Psoas muscle (tissue), 8 donors: ENCODE measurements at regions of chr5 and their contacts with region 1.

Region 1: GRCh38 chr5:57298295-57298984 is 124.6 kb downstream of the GPBP1 start:
- DNase-seq: peak; percentile 61 to 79
- ATAC-seq: peak; percentile 86 to 97 (median 92)
- H3K4me3 ChIP-seq: no peak overlapping the region
- H3K27ac ChIP-seq: no peak overlapping the region
- H3K4me1 ChIP-seq: no peaks in the 10 kb centered on the region
- H3K27me3 ChIP-seq: no peaks in the 10 kb centered on the region
- CTCF ChIP-seq: peak; percentile 87

Region 2: GRCh38 chr5:57435701-57436134 is 137.3 kb after region 1 on chr5:
- intact Hi-C with region 1: loop called in 1 of 2 experiments (anchors 5 kb)
- DNase-seq: no peak
- ATAC-seq: no peak
- H3K4me3 ChIP-seq: no peak overlapping the region
- H3K27ac ChIP-seq: no peak overlapping the region
- H3K4me1 ChIP-seq: no peaks in the 10 kb centered on the region
- H3K27me3 ChIP-seq: no peaks in the 10 kb centered on the region
- CTCF ChIP-seq: no peak

Region 3: GRCh38 chr5:57488215-57488955 is 189.9 kb after region 1 on chr5:
- intact Hi-C with region 1: loop called in 1 of 2 experiments (anchors 5 kb)
- DNase-seq: no peak
- ATAC-seq: peak in 1 of 4 donors; percentile 54
- H3K4me3 ChIP-seq: no peak overlapping the region
- H3K27ac ChIP-seq: no peak overlapping the region
- H3K4me1 ChIP-seq: no peaks in the 10 kb centered on the region
- H3K27me3 ChIP-seq: no peaks in the 10 kb centered on the region
- CTCF ChIP-seq: no peak

Region 4: DNA sequence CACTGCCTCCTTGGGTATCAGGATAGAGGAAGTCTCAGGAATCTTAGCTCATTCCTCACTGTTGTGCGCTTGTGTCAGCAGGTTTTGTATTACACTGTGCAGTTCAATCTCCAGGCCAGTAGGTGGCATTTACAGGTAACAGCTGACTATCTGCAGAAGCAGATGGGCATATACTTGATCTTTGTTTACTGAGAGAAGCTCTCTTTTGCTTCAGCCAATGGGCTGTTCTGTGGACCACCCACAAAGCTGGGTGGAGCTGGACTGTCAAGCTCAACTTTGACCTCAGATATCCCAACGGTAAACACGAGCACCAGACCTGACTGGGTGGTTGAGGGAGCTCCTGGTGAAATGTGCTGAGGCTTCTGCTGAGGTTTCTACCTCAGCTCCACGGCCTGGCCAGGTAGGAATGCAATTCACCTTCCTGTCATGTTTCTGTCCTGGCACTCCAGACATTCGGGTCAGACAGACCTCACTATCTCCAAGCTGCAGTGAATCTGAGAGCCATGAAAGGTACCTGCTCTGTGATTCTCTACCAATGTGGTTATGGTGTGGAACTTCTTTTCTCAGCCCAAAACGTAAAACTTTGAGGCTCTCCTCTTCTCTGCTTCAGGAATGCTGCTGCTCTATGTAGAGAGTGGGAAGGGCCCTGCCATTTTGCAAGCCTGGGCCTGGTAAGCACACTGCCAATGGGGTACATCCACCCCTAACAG is 352.1 kb after region 1 on chr5:
- intact Hi-C with region 1: loop called in 1 of 2 experiments (anchors 10 kb)
- DNase-seq: peak in 1 of 2 donors; percentile 25
- ATAC-seq: peak; percentile 67 to 75 (median 71)
- H3K4me3 ChIP-seq: no peak overlapping the region
- H3K27ac ChIP-seq: no peak overlapping the region
- H3K4me1 ChIP-seq: peaks cover 11% of the 10 kb centered on the region
- H3K27me3 ChIP-seq: no peaks in the 10 kb centered on the region
- CTCF ChIP-seq: peak; percentile 62

Region 5: DNA sequence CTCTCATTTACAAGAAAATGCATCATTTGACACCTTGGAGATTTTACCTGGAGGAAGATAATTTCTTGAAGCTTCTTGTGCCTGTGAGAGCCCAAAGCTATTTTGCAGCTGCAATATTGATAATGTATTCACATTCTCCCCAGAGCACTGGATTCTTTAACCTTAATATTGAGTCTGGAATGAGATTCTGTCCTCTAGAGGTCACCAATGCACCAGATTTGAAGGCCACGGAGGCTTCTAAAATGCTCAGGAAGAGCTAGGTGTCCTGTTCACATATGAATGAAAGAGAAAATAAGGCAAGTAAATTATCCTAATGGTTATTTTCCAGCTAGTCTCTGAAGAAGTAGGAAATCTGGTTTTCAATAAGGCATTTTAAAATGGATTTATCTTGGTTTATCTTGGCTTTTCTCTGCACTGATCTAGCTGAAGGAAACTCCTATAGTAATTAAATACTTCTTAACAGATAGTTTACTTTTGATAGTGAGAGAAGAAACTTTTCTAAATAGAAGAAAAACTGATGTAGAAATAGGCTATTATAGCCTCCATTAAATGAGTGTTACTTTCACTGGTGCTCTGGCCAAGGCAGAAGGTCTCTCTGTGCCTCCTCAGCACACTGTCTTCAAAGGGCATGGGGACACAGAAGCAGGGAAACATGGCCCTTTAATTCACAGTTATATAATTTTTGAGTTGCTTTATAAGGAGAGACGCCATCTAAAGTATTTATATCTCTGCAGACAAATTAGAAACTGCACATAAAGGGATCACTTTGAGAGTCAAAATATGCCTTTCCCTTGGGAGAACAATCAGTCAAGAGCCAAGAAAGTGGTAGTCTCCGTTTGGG is 481.2 kb after region 1 on chr5:
- intact Hi-C with region 1: loop called (anchors 5 to 10 kb)
- DNase-seq: no peak
- ATAC-seq: peak; percentile 82 to 92 (median 83)
- H3K4me3 ChIP-seq: no peak overlapping the region
- H3K27ac ChIP-seq: no peak overlapping the region
- H3K4me1 ChIP-seq: peaks cover 23% of the 10 kb centered on the region
- H3K27me3 ChIP-seq: no peaks in the 10 kb centered on the region
- CTCF ChIP-seq: peak; percentile 70

Region 6: DNA sequence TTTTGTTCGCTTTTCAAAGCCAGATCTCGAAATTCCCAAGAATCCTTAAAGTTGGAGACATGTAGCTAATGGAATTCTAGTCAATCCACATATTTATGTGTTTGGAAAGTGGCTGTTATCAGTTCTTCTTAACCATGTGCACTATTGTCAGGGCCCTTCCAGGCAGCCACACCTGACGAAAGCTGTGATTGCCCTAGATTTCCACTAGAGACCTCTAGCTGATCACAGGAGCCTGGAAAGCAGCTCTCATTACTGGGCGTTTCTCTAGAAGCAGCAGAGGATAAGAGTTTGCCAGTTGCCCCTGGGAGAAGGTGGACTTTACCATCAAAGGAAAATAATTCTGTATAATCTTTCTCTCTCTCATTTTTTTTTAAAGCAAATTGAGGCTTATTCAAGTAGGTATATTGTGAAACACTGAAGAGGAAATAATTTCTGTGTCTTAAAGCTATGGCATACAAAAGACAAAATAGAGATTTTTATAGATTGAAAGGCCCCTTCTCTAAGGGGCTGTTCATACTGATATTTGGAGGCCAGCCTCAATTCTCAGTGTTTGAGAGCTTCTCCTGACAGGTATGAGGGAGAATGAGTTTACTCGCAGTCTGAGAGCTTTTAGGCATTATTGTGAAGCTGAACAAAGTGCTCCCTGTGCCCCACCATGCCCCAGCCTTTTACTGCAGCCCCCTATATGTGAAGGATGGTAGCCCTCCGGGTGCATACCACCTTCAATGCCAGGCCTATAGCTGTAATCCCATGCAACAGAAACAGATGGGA is 589.6 kb after region 1 on chr5:
- intact Hi-C with region 1: loop called in 1 of 2 experiments (anchors 5 kb)
- DNase-seq: no peak
- ATAC-seq: peak; percentile 72 to 93 (median 84)
- H3K4me3 ChIP-seq: no peak overlapping the region
- H3K27ac ChIP-seq: no peak overlapping the region
- H3K4me1 ChIP-seq: no peaks in the 10 kb centered on the region
- H3K27me3 ChIP-seq: no peaks in the 10 kb centered on the region
- CTCF ChIP-seq: peak; percentile 76